Activated CD8-positive, alpha-beta T cell treated with anti-CD3 and anti-CD28 coated beads, Interleukin-2, amount 10 ng/mL, durations not matched to agents 7 days and 5 days (primary cell): ENCODE measurements at regions of chr14 and their contacts with region 1.

Region 1: GRCh38 chr14:34982417-34983147 is at the start of gene SRP54:
- DNase-seq: peak; percentile 100
- ATAC-seq: peak; percentile 93
- H3K4me3 Mint-ChIP-seq: no peak within 1 kb of the TSS
- H3K27ac Mint-ChIP-seq: no peak within 1 kb of the TSS
- H3K4me1 Mint-ChIP-seq: peaks cover 18% of the 10 kb centered on the region
- H3K27me3 Mint-ChIP-seq: no peaks in the 10 kb centered on the region
- total RNA-seq, gene SRP54: 58.6 to 61.6 TPM

Region 2: DNA sequence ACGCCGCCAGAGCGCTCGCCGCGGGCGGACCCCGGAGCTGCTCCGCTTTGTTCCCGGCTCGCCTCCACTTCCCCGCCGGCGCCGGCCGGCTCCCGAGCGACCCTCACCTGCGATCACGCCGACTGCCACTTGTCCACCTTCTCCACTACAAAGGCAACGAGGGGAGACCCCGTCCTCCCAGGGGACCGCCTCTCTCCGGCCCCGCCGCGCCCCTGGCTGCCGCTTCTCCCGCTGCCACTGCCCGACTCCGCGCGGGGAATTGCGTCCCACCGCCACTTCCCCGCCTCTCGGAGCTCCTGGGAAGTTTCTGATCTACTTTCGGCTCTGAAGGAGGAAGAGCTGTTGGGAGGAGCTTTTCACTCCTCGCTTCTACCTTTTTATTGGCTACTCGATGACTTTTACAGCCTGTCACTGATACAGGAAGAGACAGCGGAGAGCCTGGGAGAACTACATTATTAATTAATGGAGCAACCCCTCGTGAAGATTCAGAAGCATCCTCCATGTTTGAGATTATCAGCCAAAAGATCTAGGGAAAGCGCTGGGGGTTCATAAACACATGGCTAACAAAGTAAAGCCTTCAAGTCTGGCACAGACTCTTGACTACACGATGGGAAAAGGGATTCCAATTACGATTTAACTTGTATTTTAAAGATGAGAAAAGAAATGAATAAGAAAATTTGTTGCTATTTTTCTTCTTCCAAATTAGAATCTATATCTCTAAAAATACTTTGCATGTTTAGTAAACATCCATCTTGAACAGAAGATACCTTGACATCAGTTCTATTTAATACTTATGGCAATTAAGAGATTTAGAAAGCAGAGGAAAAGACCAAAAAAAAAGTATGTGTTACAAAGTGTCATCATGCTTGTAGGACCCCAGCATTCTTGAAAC is 107.3 kb before region 1 on chr14 and contains the start of gene BAZ1A:
- CTCF ChIA-PET with region 1: interaction called, 5 read pairs
- POLR2A ChIA-PET with region 1: interaction called, 22 read pairs
- DNase-seq: peak; percentile 39
- ATAC-seq: peak; percentile 43
- H3K4me3 Mint-ChIP-seq: peak within 1 kb of the TSS; percentile 100
- H3K27ac Mint-ChIP-seq: peak within 1 kb of the TSS; percentile 99
- H3K4me1 Mint-ChIP-seq: peaks cover 37% of the 10 kb centered on the region
- H3K27me3 Mint-ChIP-seq: no peaks in the 10 kb centered on the region
- total RNA-seq, gene BAZ1A: 52.7 to 54.2 TPM

Region 3: GRCh38 chr14:34935488-34935887 is 47.1 kb before region 1 on chr14:
- CTCF ChIA-PET with region 1: interaction called, 4 read pairs
- POLR2A ChIA-PET with region 1: interaction called, 14 read pairs
- DNase-seq: no peak
- ATAC-seq: no peak
- H3K4me3 Mint-ChIP-seq: no peak overlapping the region
- H3K27ac Mint-ChIP-seq: no peak overlapping the region
- H3K4me1 Mint-ChIP-seq: peaks cover 14% of the 10 kb centered on the region
- H3K27me3 Mint-ChIP-seq: no peaks in the 10 kb centered on the region

Region 4: DNA sequence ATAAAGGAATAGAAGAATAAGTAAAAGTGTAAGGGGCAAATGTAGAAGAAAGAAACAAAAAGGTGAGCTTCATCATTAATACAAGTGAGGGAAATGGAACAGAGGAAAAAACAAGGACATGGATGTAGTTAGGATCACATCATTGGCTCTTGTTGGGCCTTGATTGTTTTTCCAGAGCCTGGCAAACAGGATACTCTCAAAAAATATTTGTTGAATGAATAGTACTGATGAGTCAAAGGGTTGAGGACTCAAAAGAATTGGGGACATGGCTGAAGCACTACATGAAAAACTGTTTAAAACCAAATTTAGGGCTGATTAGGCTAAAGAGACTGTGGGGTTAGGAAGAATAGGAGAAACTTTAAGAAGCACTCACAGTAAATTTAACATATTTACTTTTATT is 11.2 kb before region 1 on chr14:
- CTCF ChIA-PET with region 1: interaction called, 10 read pairs
- POLR2A ChIA-PET with region 1: interaction called, 5 read pairs
- DNase-seq: no peak
- ATAC-seq: no peak
- H3K4me3 Mint-ChIP-seq: no peak overlapping the region
- H3K27ac Mint-ChIP-seq: no peak overlapping the region
- H3K4me1 Mint-ChIP-seq: no peaks in the 10 kb centered on the region
- H3K27me3 Mint-ChIP-seq: no peaks in the 10 kb centered on the region

Region 5: GRCh38 chr14:35046048-35046741 is 63.6 kb after region 1 on chr14 and contains the start of gene FAM177A1:
- CTCF ChIA-PET with region 1: interaction called, 6 read pairs
- POLR2A ChIA-PET with region 1: interaction called, 43 read pairs
- DNase-seq: peak; percentile 99
- ATAC-seq: peak; percentile 96
- H3K4me3 Mint-ChIP-seq: peak within 1 kb of the TSS; percentile 95
- H3K27ac Mint-ChIP-seq: peak within 1 kb of the TSS; percentile 99
- H3K4me1 Mint-ChIP-seq: peaks cover 36% of the 10 kb centered on the region
- H3K27me3 Mint-ChIP-seq: no peaks in the 10 kb centered on the region
- total RNA-seq, gene FAM177A1: 40.5 to 41.5 TPM

Region 6: DNA sequence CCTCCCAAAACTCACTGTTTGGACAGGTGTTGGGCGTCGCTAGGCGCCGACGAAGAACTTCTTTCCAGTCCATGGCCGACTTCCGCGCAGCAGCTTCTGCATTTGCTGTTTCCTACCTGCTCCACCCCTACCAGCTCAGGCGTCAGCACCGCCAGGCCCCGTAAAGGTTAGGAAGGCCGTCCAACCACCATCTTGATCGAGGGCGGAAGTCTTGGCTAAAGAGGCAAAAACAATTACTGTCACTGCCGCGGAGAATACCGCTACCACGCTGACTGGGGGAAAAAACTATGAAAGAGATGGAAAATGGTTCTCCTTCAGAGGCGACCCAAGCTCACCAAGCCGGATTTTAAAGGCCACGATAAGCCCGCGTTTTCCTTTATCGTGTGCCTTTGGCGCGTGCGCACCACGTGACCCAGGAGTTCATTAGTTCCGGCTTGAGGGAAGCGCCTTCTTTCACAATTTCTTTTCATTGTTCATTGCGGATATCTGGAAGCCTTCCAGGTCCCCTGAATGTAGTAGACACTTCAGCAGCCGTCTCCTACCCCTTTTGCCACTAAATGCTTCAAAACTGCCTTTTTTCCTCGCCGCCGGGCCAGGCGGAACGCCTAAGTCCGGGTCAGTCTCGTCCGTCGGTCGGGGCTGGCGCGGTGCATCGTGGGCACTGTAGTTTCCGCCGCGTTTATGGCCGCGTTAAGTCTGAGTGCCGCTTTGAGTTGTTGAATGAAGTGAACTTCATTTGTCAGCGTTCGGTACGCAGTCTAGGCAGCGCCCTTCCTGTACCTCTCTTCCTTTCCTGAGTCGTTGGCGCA is 139.5 kb after region 1 on chr14 and contains the starts of genes PPP2R3C and PRORP:
- CTCF ChIA-PET with region 1: interaction called, 4 read pairs
- POLR2A ChIA-PET with region 1: interaction called, 17 read pairs
- DNase-seq: peak; percentile 96
- ATAC-seq: peak; percentile 90
- H3K4me3 Mint-ChIP-seq: peak within 1 kb of the TSS; percentile 98
- H3K27ac Mint-ChIP-seq: peak within 1 kb of the TSS; percentile 99
- H3K4me1 Mint-ChIP-seq: peaks cover 55% of the 10 kb centered on the region
- H3K27me3 Mint-ChIP-seq: no peaks in the 10 kb centered on the region
- total RNA-seq, gene PPP2R3C: 33.3 to 38.6 TPM
- total RNA-seq, gene PRORP: 32.5 to 35.4 TPM